Esophagus muscularis mucosa (tissue), 4 donors: ENCODE measurements at regions of chr13 and their contacts with region 1.

Region 1: DNA sequence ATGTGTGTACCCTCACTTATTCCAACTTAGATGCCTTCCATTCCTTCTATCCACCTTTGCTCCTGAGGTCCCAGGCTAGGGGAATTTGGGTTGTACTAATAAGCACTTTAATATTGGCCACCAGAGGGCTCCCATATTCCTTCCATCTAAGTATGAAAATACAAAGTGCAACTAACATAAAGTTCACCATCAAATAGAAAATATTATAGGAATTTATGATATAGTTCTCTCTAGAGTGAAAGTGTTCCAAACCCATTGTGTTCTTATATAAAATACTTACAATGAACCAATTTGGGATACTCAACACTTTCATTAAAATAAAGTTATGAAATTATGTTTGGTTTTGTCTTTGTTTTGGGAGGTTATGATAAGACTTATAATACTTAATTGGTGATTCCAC is 62.3 kb downstream of the ITGBL1 start:
- DNase-seq: no peak
- H3K4me3 ChIP-seq: no peak overlapping the region
- H3K27ac ChIP-seq: no peak overlapping the region
- H3K4me1 ChIP-seq: no peaks in the 10 kb centered on the region
- H3K27me3 ChIP-seq: no peaks in the 10 kb centered on the region
- CTCF ChIP-seq: peak; percentile 57 to 70 (median 65)
- EP300 ChIP-seq: no peak
- POLR2A ChIP-seq: no peak

Region 2: DNA sequence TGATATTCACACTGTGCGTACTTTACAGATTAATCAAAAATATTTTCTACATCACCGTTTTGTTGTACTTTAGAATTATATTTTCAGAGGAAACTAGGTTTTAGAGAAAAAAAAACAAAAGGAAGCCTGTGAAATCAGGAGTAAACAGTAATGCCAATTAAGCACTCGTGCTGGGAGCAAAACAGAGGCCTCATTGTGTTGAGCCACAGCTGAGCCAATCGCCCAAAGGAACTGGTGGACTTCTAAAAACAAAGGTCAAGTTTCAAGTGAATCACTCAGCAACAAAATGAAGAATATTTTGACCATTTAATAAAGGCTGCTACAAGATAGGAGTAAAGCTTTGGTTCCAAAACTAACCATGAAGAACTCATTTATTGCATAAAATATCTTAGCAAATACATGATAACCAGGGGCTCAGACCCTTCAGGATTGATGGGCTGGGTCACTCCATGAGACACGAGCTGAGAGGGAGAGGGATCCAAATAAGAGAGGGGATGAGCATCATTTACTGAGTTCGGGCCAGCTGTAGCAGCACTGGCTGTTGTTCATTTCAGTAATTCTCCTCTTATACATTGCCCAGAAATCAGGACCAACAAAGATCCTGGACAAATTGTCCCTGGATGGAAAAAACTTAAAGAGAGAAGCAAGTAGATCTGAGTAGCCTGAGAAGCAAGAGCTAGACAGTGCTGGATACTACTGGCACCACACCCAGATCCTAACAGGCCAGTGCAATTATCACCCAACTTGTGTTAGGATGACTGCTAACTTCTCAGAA is 90.2 kb before region 1 on chr13:
- intact Hi-C with region 1: no loop called
- DNase-seq: no peak
- H3K4me3 ChIP-seq: no peak overlapping the region
- H3K27ac ChIP-seq: no peak overlapping the region
- H3K4me1 ChIP-seq: no peaks in the 10 kb centered on the region
- H3K27me3 ChIP-seq: no peaks in the 10 kb centered on the region
- CTCF ChIP-seq: no peak
- EP300 ChIP-seq: no peak
- POLR2A ChIP-seq: no peak

Region 3: DNA sequence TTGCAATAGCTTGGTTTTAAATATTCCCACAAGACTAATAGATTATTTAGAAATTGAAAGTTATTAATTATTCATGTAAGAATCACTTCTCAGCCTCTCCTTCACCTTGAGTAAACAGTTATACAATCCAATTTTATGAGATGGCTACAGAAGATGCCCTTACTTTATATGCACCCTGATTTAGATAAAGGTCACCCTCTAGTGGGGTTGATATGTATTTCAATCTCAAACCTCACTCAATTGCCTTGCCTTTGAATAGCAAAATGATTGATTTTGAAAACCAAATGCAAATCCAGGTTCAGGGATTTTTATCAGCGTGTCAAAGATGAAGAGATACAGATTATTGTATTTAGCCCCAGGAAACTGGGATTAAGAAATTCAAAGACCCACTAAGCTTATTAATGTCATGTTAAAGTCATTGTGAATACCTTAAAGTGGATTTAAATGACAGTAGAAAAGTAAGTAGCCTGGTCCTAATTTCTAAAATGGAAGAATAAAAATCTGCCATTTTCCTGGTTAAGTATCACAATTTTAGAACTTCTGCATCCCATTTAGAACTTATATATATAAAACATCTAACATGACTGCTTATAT is 242.8 kb after region 1 on chr13:
- intact Hi-C with region 1: loop called (anchors 1 kb)
- DNase-seq: no peak
- H3K4me3 ChIP-seq: no peak overlapping the region
- H3K27ac ChIP-seq: no peak overlapping the region
- H3K4me1 ChIP-seq: no peaks in the 10 kb centered on the region
- H3K27me3 ChIP-seq: no peaks in the 10 kb centered on the region
- CTCF ChIP-seq: peak; percentile 50 to 62 (median 57)
- EP300 ChIP-seq: no peak
- POLR2A ChIP-seq: no peak